MCF 10A (cell line): ENCODE measurements at regions of chr6 and their contacts with region 1.

Region 1: DNA sequence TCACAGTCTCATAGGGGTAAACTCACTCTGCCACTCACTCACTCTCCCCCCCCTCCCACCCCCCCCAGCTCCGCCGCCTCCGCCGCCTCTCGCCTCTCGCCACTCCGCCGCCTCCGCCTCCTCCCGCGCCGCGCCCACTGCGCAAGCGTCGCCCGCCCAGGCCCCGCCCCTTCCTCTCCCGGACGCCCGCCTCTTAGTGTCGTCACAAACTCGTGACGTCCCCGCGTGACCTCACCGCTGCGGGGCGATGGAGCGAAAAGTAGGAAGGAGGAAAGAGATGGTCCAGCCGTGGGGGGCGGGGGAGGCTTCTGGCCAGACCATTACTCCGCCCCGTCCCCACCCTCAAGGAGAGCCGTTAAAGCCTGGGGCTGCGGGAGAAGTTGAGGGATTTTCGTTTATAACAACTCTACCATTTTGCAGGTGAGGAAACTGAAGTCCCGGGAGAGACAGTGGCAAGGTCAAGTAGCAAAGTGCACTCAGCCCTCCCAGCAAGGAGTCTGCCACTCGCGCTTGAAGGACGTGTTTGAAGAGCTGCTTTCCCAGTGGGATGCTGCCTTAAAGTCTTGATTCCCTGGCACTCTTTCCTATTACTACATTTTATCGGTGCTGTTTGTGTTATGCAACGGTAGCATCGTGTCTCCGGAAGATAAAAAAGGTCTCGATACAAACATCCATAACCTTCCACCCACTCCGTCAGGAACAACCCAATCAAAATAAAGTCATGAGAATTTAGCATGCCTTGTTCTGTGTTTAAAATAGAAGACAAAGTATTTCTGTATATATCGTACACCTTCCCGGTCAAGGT is at the start of gene ILRUN:
- DNase-seq: peak; percentile 93
- H3K4me3 Mint-ChIP-seq: peak within 1 kb of the TSS; percentile 81
- H3K27ac Mint-ChIP-seq: peak within 1 kb of the TSS; percentile 32
- H3K4me1 Mint-ChIP-seq: peaks cover 10% of the 10 kb centered on the region
- H3K27me3 Mint-ChIP-seq: no peaks in the 10 kb centered on the region
- CTCF ChIP-seq: no peak
- total RNA-seq, gene ILRUN: 49.2 and 50.8 TPM in 2 replicates

Region 2: GRCh38 chr6:34015586-34015985 is 681.4 kb before region 1 on chr6:
- CTCF ChIA-PET with region 1: no interaction called
- POLR2A ChIA-PET with region 1: no interaction called
- intact Hi-C with region 1: no loop called
- DNase-seq: no peak
- H3K4me3 Mint-ChIP-seq: no peak overlapping the region
- H3K27ac Mint-ChIP-seq: no peak overlapping the region
- H3K4me1 Mint-ChIP-seq: no peaks in the 10 kb centered on the region
- H3K27me3 Mint-ChIP-seq: peaks cover under 1% of the 10 kb centered on the region
- CTCF ChIP-seq: no peak

Region 3: GRCh38 chr6:34656378-34657036 is 40.4 kb before region 1 on chr6:
- CTCF ChIA-PET with region 1: interaction called, 3 read pairs
- POLR2A ChIA-PET with region 1: interaction called, 60 read pairs
- intact Hi-C with region 1: no loop called
- DNase-seq: peak; percentile 41
- H3K4me3 Mint-ChIP-seq: peak overlapping the region; percentile 75
- H3K27ac Mint-ChIP-seq: peak overlapping the region; percentile 89
- H3K4me1 Mint-ChIP-seq: peaks cover 19% of the 10 kb centered on the region
- H3K27me3 Mint-ChIP-seq: no peaks in the 10 kb centered on the region
- CTCF ChIP-seq: no peak

Region 4: DNA sequence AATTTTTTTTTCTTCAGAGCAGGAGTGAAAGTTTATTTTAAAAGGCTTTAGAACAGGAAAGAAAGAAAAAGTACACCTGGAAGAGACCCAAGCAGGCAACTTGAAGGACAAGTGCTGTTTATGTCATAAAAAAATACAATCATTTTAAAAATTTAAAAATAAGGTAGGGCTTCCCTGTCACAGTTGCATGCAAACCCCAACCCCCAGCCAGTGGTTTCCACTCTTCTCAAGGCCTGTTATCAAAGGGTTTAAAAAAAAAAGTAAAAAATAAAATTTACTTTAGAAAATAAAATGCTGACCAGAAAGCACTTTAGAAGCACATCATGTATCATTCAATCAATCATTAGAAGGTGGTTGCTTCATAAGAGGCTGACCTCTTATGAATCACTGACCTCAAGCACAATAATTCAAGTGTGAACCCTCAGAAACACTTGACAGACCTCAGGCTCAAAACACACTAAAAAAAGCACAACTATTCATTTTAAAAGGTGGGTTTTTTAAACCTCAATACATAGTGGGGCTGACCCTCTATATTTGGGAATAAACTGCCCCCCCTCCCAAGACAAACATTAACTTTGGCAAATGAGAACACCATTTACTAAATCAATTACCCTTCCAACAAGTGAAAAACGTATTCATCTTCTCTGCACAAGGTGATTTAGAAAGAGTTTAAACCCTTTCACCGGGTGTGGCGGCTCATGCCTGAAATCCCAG is 16.0 kb before region 1 on chr6:
- CTCF ChIA-PET with region 1: no interaction called
- POLR2A ChIA-PET with region 1: interaction called, 10 read pairs
- intact Hi-C with region 1: loop called (anchors 1 kb)
- DNase-seq: peak; percentile 75
- H3K4me3 Mint-ChIP-seq: peak overlapping the region; percentile 56
- H3K27ac Mint-ChIP-seq: peak overlapping the region; percentile 63
- H3K4me1 Mint-ChIP-seq: peaks cover 25% of the 10 kb centered on the region
- H3K27me3 Mint-ChIP-seq: no peaks in the 10 kb centered on the region
- CTCF ChIP-seq: no peak

Region 5: GRCh38 chr6:34718867-34719455 is 22.0 kb after region 1 on chr6:
- CTCF ChIA-PET with region 1: no interaction called
- POLR2A ChIA-PET with region 1: interaction called, 11 read pairs
- intact Hi-C with region 1: no loop called
- DNase-seq: no peak
- H3K4me3 Mint-ChIP-seq: peak overlapping the region; percentile 35
- H3K27ac Mint-ChIP-seq: no peak overlapping the region
- H3K4me1 Mint-ChIP-seq: peaks cover 17% of the 10 kb centered on the region
- H3K27me3 Mint-ChIP-seq: no peaks in the 10 kb centered on the region
- CTCF ChIP-seq: no peak

Region 6: DNA sequence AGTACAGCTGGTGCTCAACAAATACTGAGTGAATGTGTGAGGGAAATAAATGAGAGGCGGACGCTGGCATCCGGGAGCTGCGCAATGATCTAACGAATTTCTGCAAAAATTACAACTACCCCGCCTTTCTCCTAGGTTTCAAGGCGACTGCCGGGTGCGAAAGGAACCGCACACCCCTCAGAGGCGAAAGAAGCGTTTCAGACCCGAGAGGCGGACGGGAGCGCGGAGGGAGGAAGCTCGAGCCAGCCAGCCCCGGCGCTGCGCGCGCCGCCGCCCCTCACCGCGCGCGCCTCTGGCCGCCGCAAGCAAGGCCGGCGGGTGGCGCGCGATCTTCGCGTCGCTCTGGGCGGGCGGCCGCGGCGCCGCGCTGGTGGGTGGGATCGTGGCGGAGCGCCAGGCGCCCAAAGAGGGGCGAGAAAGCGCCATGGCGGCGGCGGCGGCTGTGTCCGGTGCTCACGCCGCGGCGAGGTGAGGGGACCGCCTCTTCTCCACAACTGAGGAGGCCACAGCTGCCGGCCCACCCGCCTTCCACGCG is 94.8 kb after region 1 on chr6 and contains the start of gene BLTP3A:
- CTCF ChIA-PET with region 1: no interaction called
- POLR2A ChIA-PET with region 1: interaction called, 20 read pairs
- intact Hi-C with region 1: no loop called
- DNase-seq: peak; percentile 56
- H3K4me3 Mint-ChIP-seq: peak within 1 kb of the TSS; percentile 97
- H3K27ac Mint-ChIP-seq: peak within 1 kb of the TSS; percentile 99
- H3K4me1 Mint-ChIP-seq: peaks cover 15% of the 10 kb centered on the region
- H3K27me3 Mint-ChIP-seq: no peaks in the 10 kb centered on the region
- CTCF ChIP-seq: no peak
- total RNA-seq, gene BLTP3A: 18.5 and 25.4 TPM in 2 replicates